Activated CD8-positive, alpha-beta T cell treated with anti-CD3 and anti-CD28 coated beads for 36 hours (primary cell): ENCODE measurements at regions of chr3 and their contacts with region 1.

Region 1: GRCh38 chr3:4986782-4987537 is 7.7 kb downstream of the BHLHE40 start:
- DNase-seq: peak; percentile 91
- ATAC-seq: peak; percentile 67
- H3K4me3 Mint-ChIP-seq: peak overlapping the region; percentile 92
- H3K27ac Mint-ChIP-seq: peak overlapping the region; percentile 88
- H3K4me1 Mint-ChIP-seq: peaks cover 63% of the 10 kb centered on the region
- H3K27me3 Mint-ChIP-seq: no peaks in the 10 kb centered on the region
- CTCF ChIP-seq: no peak

Region 2: DNA sequence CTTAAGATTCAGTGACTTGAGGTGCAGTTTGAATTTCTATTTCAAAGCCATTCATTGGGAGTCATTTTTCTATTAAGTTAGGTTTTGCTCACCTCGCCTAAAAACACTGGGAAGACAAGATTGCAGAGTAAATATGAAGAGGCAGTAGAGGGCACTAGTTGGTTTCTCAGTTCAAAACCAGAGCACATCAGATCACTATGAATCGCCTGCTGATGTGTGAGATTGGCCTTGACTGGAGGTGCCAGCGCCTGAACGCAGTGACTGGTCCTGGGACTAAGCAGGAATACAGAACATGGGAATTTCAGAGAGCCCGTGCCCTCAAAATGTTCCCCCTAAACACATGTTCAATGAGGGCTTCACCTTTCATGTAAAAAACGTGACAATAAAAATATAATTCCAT is 264.9 kb before region 1 on chr3:
- CTCF ChIA-PET with region 1: interaction called, 10 read pairs
- POLR2A ChIA-PET with region 1: interaction called, 3 read pairs
- intact Hi-C with region 1: no loop called
- DNase-seq: peak; percentile 36
- ATAC-seq: peak; percentile 80
- H3K4me3 Mint-ChIP-seq: no peak overlapping the region
- H3K27ac Mint-ChIP-seq: peak overlapping the region; percentile 64
- H3K4me1 Mint-ChIP-seq: peaks cover 30% of the 10 kb centered on the region
- H3K27me3 Mint-ChIP-seq: no peaks in the 10 kb centered on the region
- CTCF ChIP-seq: peak; percentile 34

Region 3: DNA sequence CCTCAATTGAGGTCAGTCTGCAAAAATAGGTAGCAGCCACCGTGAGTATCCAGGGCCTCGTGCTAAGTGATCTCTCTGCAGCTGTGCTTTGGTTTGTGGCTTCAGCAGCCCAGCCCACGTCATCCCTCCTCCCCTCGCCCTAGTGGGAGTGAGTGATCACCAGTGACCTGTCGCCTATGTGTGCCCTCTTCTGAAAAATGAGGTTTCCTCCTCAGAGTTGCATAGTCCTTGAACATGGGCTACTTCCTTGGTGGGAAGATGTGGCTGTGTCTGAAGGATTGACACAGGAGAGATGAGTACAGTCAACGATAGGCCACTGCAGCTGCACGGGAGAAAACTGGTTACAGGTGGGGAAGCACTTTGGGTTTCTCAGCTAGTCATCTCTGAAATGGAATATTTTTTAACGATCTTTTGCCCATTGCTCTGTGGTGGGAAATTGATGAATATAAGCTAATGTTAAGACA is 152.5 kb before region 1 on chr3:
- CTCF ChIA-PET with region 1: interaction called, 3 read pairs
- POLR2A ChIA-PET with region 1: interaction called, 434 read pairs
- intact Hi-C with region 1: loop called (anchors 2 kb)
- DNase-seq: peak; percentile 95
- ATAC-seq: peak; percentile 48
- H3K4me3 Mint-ChIP-seq: peak overlapping the region; percentile 63
- H3K27ac Mint-ChIP-seq: peak overlapping the region; percentile 97
- H3K4me1 Mint-ChIP-seq: peaks cover 86% of the 10 kb centered on the region
- H3K27me3 Mint-ChIP-seq: no peaks in the 10 kb centered on the region
- CTCF ChIP-seq: no peak

Region 4: DNA sequence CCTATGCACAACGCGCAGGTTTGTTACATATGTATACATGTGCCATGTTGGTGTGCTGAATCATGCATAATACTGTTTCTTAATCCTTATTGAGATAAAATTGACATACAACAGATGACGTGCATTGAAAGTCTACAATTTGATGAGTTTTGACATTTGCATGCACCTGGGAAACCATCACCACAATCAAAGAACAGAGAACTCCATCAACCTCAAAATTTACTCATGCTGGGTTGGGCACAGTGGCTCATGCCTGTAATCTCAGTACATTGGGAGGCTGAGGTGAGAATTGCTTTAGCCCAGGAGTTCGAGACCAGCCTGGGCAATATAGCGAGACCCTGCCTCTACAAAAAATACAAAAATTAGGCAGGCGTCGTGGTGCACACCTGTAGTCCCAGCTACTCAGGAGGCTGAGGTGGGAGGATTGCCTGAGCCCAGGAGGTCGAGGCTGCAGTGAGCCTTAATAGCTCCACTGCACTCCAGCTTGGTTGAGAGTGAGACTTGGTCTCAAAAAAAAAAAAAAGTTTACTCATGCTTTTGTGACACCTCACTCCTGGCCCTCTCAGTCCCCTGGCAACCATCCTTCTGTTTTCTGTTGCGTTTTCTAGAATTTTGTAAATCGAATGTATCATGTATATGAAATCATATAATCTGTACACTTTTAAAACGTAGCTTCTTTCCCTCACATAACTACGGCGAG is 48.9 kb after region 1 on chr3:
- CTCF ChIA-PET with region 1: interaction called, 17 read pairs
- POLR2A ChIA-PET with region 1: interaction called, 276 read pairs
- intact Hi-C with region 1: no loop called
- DNase-seq: no peak
- ATAC-seq: no peak
- H3K4me3 Mint-ChIP-seq: no peak overlapping the region
- H3K27ac Mint-ChIP-seq: no peak overlapping the region
- H3K4me1 Mint-ChIP-seq: peaks cover 29% of the 10 kb centered on the region
- H3K27me3 Mint-ChIP-seq: peaks cover 4% of the 10 kb centered on the region
- CTCF ChIP-seq: no peak

Region 5: DNA sequence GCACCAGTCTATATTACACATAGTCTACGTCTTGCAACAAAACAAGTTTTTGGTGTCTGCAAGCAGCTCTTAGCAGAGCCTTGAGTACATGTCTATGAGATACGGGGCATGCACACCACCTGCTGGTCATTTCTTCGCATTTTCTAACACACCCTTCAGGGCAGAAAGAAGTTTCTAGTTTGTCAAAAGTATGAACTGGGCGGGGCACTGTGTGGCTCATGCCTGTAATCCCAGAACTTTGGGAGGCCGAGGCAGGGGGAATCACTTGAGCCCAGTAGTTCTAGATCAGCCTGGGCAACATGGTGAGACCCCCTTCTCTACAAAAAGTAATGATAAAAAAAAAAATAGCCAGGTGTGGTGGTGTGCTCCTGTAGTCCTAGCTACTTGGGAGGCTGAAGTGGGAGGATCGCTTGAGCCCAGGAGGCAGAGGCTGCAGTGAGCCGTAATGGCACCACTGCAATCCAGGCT is 70.9 kb after region 1 on chr3:
- CTCF ChIA-PET with region 1: interaction called, 31 read pairs
- POLR2A ChIA-PET with region 1: interaction called, 31 read pairs
- intact Hi-C with region 1: loop called (anchors 5 kb)
- DNase-seq: peak; percentile 93
- ATAC-seq: peak; percentile 95
- H3K4me3 Mint-ChIP-seq: no peak overlapping the region
- H3K27ac Mint-ChIP-seq: no peak overlapping the region
- H3K4me1 Mint-ChIP-seq: peaks cover 32% of the 10 kb centered on the region
- H3K27me3 Mint-ChIP-seq: peaks cover 11% of the 10 kb centered on the region
- CTCF ChIP-seq: peak; percentile 86

Region 6: GRCh38 chr3:5165698-5166097 is 178.7 kb after region 1 on chr3:
- CTCF ChIA-PET with region 1: no interaction called
- POLR2A ChIA-PET with region 1: no interaction called
- intact Hi-C with region 1: no loop called
- DNase-seq: no peak
- ATAC-seq: no peak
- H3K4me3 Mint-ChIP-seq: no peak overlapping the region
- H3K27ac Mint-ChIP-seq: peak overlapping the region; percentile 42
- H3K4me1 Mint-ChIP-seq: peaks cover 56% of the 10 kb centered on the region
- H3K27me3 Mint-ChIP-seq: no peaks in the 10 kb centered on the region
- CTCF ChIP-seq: no peak